ENCODE measurements at regions of chr2 and their contacts with region 1.

Region 1: DNA sequence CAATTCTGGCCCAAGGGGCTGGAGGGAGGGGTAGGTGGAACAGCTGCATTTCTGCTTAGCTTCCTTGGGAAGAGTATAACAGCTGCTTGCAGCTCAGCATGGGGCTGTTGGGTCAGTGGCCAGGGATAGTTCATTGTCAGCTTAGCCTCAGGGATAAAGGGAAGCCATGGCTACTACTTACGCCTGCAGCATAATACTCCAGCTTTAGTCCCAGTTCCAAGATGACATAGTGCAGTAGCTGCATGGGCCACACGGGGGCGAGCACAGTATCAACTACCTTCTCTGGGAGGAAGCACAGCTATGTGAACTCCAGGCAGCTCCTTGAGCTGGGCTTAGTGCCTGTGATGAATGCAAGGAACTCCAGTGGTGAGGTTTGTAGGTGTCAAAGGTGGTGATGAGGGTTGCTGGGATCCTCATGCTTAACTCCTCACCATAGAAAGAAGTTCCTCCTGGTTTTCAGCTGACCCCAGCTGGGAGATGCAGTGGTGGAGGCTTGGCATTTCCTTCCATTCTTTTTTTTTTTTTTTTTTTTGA is 35.4 kb upstream of the RHOB start:
- DNase-seq: peak; percentile 84
- H3K4me3 Mint-ChIP-seq: no peak overlapping the region
- H3K27ac Mint-ChIP-seq: no peak overlapping the region
- H3K4me1 Mint-ChIP-seq: peaks cover 2% of the 10 kb centered on the region
- H3K27me3 Mint-ChIP-seq: peaks cover 53% of the 10 kb centered on the region

Region 2: DNA sequence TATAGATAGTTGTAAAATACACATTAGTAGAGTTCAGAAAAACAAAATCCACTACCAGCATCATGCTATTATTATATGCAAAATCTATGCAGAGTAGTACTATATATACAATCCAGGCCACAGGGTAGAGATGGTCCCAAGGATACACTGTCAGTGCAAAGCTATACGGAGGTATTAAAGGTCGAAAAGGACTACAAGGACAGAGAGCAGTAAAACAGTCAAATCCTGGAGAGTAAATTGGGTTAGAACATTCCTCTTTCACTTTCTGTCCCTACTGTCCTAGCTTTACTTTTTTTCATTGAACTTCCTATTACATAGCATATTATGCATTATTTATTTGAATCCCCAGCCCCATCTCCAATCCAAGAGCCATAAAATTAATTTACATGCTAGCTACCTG is 146.8 kb before region 1 on chr2:
- CTCF ChIA-PET with region 1: no interaction called
- DNase-seq: no peak
- H3K4me3 Mint-ChIP-seq: no peak overlapping the region
- H3K27ac Mint-ChIP-seq: peak overlapping the region; percentile 74
- H3K4me1 Mint-ChIP-seq: no peaks in the 10 kb centered on the region
- H3K27me3 Mint-ChIP-seq: no peaks in the 10 kb centered on the region

Region 3: DNA sequence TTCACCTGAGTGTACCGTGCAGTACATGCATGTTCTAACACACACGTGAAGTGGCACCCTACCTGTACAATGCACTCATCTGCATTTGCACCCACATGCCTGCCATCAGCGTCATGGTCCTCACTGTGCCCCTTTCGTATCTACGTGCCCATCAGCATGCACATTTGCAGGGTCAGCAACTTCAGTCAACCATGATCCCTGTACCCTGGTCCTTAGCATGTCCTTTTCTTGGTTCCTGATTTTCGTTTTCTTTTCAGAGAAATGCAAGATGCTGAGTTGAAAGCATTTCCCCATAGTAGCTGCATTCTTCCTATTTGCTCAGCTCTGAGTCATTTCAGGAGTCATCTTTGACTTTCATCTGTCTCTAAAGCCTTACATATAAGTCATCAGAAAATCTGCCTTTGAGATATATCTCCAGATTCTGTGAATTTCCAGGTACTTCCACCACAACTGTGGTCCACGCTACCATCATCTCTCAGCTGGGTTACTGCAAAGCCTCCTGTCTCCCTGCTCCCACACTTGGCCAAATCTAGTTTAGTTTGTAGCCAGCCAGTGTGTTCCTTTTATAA is 46.1 kb before region 1 on chr2:
- CTCF ChIA-PET with region 1: interaction called, 10 read pairs
- DNase-seq: peak; percentile 71
- H3K4me3 Mint-ChIP-seq: no peak overlapping the region
- H3K27ac Mint-ChIP-seq: peak overlapping the region; percentile 61
- H3K4me1 Mint-ChIP-seq: peaks cover 31% of the 10 kb centered on the region
- H3K27me3 Mint-ChIP-seq: peaks cover 17% of the 10 kb centered on the region

Region 4: DNA sequence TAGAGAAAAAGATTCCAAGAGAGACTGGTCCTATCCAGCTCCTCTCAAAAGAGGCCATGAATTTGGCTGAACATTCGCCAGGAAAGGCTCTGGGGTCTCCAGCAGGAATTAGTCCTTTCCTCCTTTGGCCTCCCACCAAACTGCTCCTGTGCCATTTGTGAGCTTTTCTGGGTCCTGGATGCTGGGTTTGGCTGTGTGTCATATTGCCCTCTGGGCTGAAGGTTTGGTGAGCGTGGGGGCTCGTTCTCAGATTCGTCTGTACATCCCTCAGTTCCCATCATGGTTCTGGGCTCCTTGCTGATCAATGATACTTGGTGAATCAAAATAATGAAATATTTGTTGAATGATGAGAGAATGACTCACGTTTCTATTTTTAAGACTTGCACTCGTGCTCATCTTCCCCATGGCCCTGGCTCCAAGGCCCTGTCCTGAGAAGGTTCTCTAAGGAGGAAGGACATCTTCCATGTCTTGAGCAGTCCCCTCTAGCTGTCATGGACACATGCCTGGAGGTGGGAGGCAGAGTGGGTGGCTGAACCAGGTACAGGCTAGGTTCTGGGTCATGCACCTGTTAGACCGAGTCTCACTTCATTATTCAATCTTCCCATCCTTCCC is 12.4 kb before region 1 on chr2:
- CTCF ChIA-PET with region 1: interaction called, 38 read pairs
- DNase-seq: no peak
- H3K4me3 Mint-ChIP-seq: no peak overlapping the region
- H3K27ac Mint-ChIP-seq: no peak overlapping the region
- H3K4me1 Mint-ChIP-seq: no peaks in the 10 kb centered on the region
- H3K27me3 Mint-ChIP-seq: peaks cover 41% of the 10 kb centered on the region

Region 5: GRCh38 chr2:20438334-20439192 is 27.1 kb after region 1 on chr2:
- CTCF ChIA-PET with region 1: interaction called, 26 read pairs
- DNase-seq: no peak
- H3K4me3 Mint-ChIP-seq: no peak overlapping the region
- H3K27ac Mint-ChIP-seq: no peak overlapping the region
- H3K4me1 Mint-ChIP-seq: no peaks in the 10 kb centered on the region
- H3K27me3 Mint-ChIP-seq: peaks cover 54% of the 10 kb centered on the region

Region 6: GRCh38 chr2:20642055-20642971 is 230.9 kb after region 1 on chr2:
- CTCF ChIA-PET with region 1: interaction called, 52 read pairs
- DNase-seq: peak; percentile 80
- H3K4me3 Mint-ChIP-seq: no peak overlapping the region
- H3K27ac Mint-ChIP-seq: no peak overlapping the region
- H3K4me1 Mint-ChIP-seq: no peaks in the 10 kb centered on the region
- H3K27me3 Mint-ChIP-seq: no peaks in the 10 kb centered on the region

Measured in activated naive CD4-positive, alpha-beta T cell treated with anti-CD3 and anti-CD28 coated beads, Interleukin-2, amount 10 ng/mL, durations not matched to agents 7 days and 5 days (primary cell).